Heart left ventricle (tissue), 16 donors: ENCODE measurements at regions of chr1 and their contacts with region 1.

Region 1: DNA sequence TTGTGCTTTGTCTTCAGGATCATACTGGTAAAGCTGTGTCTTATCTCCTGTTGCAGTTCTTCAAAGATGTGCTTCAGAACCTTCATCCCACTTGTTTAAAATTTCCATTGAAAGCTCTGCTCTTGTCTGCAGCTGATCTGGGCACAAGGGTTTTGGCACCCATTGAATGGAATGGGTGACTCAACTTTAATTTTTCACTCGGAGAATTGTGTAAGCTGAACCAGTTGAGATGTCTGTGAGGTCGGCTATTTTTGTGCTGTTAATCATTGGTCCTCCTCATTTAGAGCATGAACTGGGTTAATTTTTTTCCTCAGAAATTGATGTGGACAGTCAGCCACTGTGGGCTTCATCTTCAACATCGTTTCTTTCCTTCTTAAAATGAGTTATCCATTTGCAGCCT is 252.1 kb downstream of the TM2D1 start:
- DNase-seq: no peak
- ATAC-seq: no peak
- H3K4me3 ChIP-seq: no peak overlapping the region
- H3K27ac ChIP-seq: no peak overlapping the region
- H3K4me1 ChIP-seq: no peaks in the 10 kb centered on the region
- H3K27me3 ChIP-seq: no peaks in the 10 kb centered on the region
- CTCF ChIP-seq: no peak
- POLR2A ChIP-seq: no peak

Region 2: GRCh38 chr1:61588736-61589672 is 116.1 kb after region 1 on chr1:
- intact Hi-C with region 1: loop called in 3 of 10 experiments (anchors 10 kb)
- DNase-seq: peak; percentile 29 to 64 (median 48)
- ATAC-seq: peak; percentile 56 to 85 (median 80)
- H3K4me3 ChIP-seq: no peak overlapping the region
- H3K27ac ChIP-seq: peak overlapping the region in 1 of 12 donors; percentile 24
- H3K4me1 ChIP-seq: peaks cover 0 to 6% (median 0%) of the 10 kb centered on the region in 12 donors
- H3K27me3 ChIP-seq: no peaks in the 10 kb centered on the region
- CTCF ChIP-seq: peak; percentile 56 to 77 (median 66)
- POLR2A ChIP-seq: no peak